Activated CD8-positive, alpha-beta T cell treated with anti-CD3 and anti-CD28 coated beads for 36 hours (primary cell): ENCODE measurements at regions of chr1 and their contacts with region 1.

Region 1: GRCh38 chr1:206982216-206982615 is 12.0 kb upstream of the FCAMR start:
- DNase-seq: peak; percentile 79
- ATAC-seq: peak; percentile 82
- H3K4me3 Mint-ChIP-seq: no peak overlapping the region
- H3K27ac Mint-ChIP-seq: no peak overlapping the region
- H3K4me1 Mint-ChIP-seq: no peaks in the 10 kb centered on the region
- H3K27me3 Mint-ChIP-seq: peaks cover 5% of the 10 kb centered on the region
- CTCF ChIP-seq: peak; percentile 78

Region 2: DNA sequence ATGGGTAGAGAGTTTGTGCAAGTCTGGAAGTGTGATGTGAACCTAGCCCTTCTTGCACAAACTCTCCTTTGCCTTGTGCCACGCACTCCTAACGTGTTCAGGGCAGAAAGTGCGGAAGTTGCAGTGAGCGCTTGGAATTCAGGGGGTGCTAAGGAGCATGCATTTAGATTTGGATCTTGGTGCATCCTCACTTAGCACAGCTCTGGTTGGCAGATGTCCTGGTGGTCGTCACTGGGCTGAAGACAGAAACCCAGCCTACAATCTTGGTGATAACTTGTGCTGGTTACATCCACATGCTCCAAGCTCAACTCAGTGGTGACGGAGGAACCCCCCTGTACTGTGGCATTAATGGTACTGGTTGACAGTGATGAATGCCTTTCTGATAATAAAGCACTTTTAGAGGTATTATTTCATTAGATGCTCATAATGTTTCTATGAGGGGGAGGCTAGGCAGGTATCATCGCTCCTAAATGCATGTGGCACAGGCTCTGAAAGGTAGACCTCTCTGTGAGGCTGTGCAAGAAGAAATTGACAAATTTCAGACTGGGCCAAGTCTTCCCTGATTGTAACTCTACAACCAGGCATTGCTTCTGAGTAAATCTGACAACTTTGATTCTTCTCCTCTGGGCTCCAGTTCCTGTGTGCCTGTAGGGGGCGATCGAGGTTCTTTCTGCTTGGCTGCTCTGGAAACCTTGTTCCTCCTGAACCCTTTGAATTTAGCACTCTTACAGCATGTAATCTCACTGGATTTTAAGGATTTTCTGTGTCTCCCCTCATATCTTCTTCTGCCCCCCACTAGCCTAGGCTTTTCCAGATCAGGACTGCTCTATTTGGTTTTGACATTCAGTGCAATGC is 256.9 kb before region 1 on chr1:
- CTCF ChIA-PET with region 1: interaction called, 18 read pairs
- POLR2A ChIA-PET with region 1: no interaction called
- intact Hi-C with region 1: no loop called
- DNase-seq: peak; percentile 83
- ATAC-seq: peak; percentile 57
- H3K4me3 Mint-ChIP-seq: no peak overlapping the region
- H3K27ac Mint-ChIP-seq: no peak overlapping the region
- H3K4me1 Mint-ChIP-seq: peaks cover 57% of the 10 kb centered on the region
- H3K27me3 Mint-ChIP-seq: no peaks in the 10 kb centered on the region
- CTCF ChIP-seq: peak; percentile 6

Region 3: GRCh38 chr1:206941858-206942387 is 40.3 kb before region 1 on chr1:
- CTCF ChIA-PET with region 1: interaction called, 182 read pairs
- POLR2A ChIA-PET with region 1: interaction called, 4 read pairs
- intact Hi-C with region 1: no loop called
- DNase-seq: no peak
- ATAC-seq: no peak
- H3K4me3 Mint-ChIP-seq: no peak overlapping the region
- H3K27ac Mint-ChIP-seq: no peak overlapping the region
- H3K4me1 Mint-ChIP-seq: no peaks in the 10 kb centered on the region
- H3K27me3 Mint-ChIP-seq: peaks cover 2% of the 10 kb centered on the region
- CTCF ChIP-seq: no peak

Region 4: DNA sequence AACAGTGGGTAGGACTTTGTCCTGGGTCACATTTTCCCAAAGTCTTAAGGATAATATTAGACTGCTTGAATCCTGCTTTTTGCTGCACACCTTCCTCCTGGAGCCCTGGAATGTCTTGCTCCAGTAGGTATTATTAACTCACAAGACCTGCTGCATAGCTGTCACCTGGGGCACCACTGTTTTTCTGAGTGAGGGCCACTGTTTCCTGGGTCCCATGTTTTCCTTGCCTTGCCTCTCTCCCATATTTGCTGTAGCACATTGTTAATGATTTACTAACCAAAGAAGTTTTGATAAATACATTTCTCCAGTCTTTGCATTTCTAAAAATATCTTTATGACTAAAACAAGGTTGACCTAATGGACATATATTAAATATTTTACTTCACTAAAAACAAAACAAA is 10.6 kb after region 1 on chr1:
- CTCF ChIA-PET with region 1: interaction called, 23 read pairs
- POLR2A ChIA-PET with region 1: no interaction called
- intact Hi-C with region 1: no loop called
- DNase-seq: no peak
- ATAC-seq: no peak
- H3K4me3 Mint-ChIP-seq: no peak overlapping the region
- H3K27ac Mint-ChIP-seq: no peak overlapping the region
- H3K4me1 Mint-ChIP-seq: no peaks in the 10 kb centered on the region
- H3K27me3 Mint-ChIP-seq: peaks cover 7% of the 10 kb centered on the region
- CTCF ChIP-seq: no peak

Region 5: DNA sequence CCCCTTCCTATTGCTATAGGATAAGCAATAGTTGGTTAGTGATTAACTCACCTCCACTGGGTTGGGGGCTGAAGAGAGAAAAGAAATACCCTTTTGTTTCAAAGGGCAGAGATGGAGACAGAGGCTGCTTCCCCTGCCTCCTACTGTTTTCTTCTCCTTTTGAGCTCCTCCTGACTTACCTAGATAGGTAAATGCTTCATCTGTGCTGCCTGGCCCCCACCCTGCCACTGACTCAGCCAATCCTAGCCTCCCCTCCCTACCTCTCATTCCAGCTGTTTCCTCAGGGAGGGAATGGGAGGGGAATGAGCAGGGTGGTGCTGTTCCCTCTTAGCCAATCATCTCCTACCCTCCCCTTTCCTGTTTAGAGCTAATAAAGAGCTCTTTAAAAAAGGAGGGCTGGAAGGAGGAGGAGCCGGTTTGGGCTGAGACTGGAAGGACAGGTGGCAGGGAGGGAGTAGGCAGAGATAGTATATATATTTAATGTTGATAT is 50.4 kb after region 1 on chr1 and contains the start of gene C1orf116:
- CTCF ChIA-PET with region 1: interaction called, 16 read pairs
- POLR2A ChIA-PET with region 1: no interaction called
- intact Hi-C with region 1: no loop called
- DNase-seq: no peak
- ATAC-seq: no peak
- H3K4me3 Mint-ChIP-seq: no peak within 1 kb of the TSS
- H3K27ac Mint-ChIP-seq: no peak within 1 kb of the TSS
- H3K4me1 Mint-ChIP-seq: no peaks in the 10 kb centered on the region
- H3K27me3 Mint-ChIP-seq: peaks cover 29% of the 10 kb centered on the region
- CTCF ChIP-seq: no peak
- total RNA-seq, gene C1orf116: 0.07 to 0.13 TPM